PC-9 (cell line): ENCODE measurements at regions of chr16 and their contacts with region 1.

Region 1: DNA sequence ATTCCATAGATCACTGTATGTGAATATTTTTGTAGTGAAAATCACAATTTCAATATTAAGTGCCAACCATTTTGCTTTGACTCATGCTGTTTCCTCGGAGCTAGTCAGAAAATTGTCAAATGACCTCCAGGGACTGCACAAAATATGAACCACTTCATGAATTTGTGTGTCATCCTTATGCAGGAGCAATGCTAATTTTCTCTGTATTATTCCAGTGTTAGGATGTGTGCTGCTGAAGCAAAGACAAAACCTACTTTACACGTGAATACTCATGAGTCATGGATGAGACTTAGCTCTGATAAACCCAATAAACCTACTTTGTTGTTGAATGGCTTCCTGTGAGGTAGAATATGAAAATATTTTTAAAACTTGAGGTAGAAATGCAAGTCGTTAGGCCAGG is 65.2 kb downstream of the SHCBP1 start:
- DNase-seq: no peak
- H3K4me3 ChIP-seq: no peak overlapping the region
- H3K27ac ChIP-seq: no peak overlapping the region
- H3K4me1 ChIP-seq: no peaks in the 10 kb centered on the region
- H3K27me3 ChIP-seq: peaks cover 3% of the 10 kb centered on the region; the same call in 1 of the 2 replicates
- CTCF ChIP-seq: no peak

Region 2: GRCh38 chr16:46612121-46612520 is 56.2 kb after region 1 on chr16:
- CTCF ChIA-PET with region 1: no interaction called
- POLR2A ChIA-PET with region 1: no interaction called
- intact Hi-C with region 1: loop called (anchors 5 kb)
- DNase-seq: no peak
- H3K4me3 ChIP-seq: no peak overlapping the region
- H3K27ac ChIP-seq: no peak overlapping the region
- H3K4me1 ChIP-seq: no peaks in the 10 kb centered on the region
- H3K27me3 ChIP-seq: no peaks in the 10 kb centered on the region
- CTCF ChIP-seq: no peak